Heart right ventricle (tissue), 16 donors: ENCODE measurements at regions of chr1 and their contacts with region 1.

Region 1: GRCh38 chr1:93722081-93723031 is 40.7 kb upstream of the BCAR3 start:
- DNase-seq: peak; percentile 76 to 80
- ATAC-seq: peak; percentile 76 to 94 (median 90)
- H3K4me3 ChIP-seq: no peak overlapping the region
- H3K27ac ChIP-seq: peak overlapping the region; percentile 58 to 93 (median 88)
- H3K4me1 ChIP-seq: peaks cover 25 to 60% (median 33%) of the 10 kb centered on the region in 9 donors
- H3K27me3 ChIP-seq: no peaks in the 10 kb centered on the region
- CTCF ChIP-seq: peak in 7 of 9 donors; percentile 16 to 58 (median 36)

Region 2: GRCh38 chr1:93288558-93288957 is 433.8 kb before region 1 on chr1:
- intact Hi-C with region 1: no loop called
- DNase-seq: no peak
- ATAC-seq: no peak
- H3K4me3 ChIP-seq: no peak overlapping the region
- H3K27ac ChIP-seq: no peak overlapping the region
- H3K4me1 ChIP-seq: no peaks in the 10 kb centered on the region
- H3K27me3 ChIP-seq: no peaks in the 10 kb centered on the region
- CTCF ChIP-seq: no peak

Region 3: GRCh38 chr1:93680757-93681550 is 41.4 kb before region 1 on chr1:
- intact Hi-C with region 1: loop called in 3 of 10 experiments (anchors 5 kb)
- DNase-seq: peak; percentile 82 to 86
- ATAC-seq: peak; percentile 87 to 94 (median 91)
- H3K4me3 ChIP-seq: peak overlapping the region; percentile 73 to 95 (median 86)
- H3K27ac ChIP-seq: peak overlapping the region; percentile 78 to 96 (median 90)
- H3K4me1 ChIP-seq: peaks cover 9 to 58% (median 45%) of the 10 kb centered on the region in 9 donors
- H3K27me3 ChIP-seq: peaks cover 0 to 32% (median 0%) of the 10 kb centered on the region in 7 donors
- CTCF ChIP-seq: peak; percentile 42 to 74 (median 57)

Region 4: GRCh38 chr1:93770640-93771039 is 48.3 kb after region 1 on chr1:
- intact Hi-C with region 1: loop called in 1 of 10 experiments (anchors 5 kb)
- DNase-seq: no peak
- ATAC-seq: no peak
- H3K4me3 ChIP-seq: no peak overlapping the region
- H3K27ac ChIP-seq: no peak overlapping the region
- H3K4me1 ChIP-seq: peaks cover 2 to 22% (median 16%) of the 10 kb centered on the region in 9 donors
- H3K27me3 ChIP-seq: peaks cover 0 to 3% (median 0%) of the 10 kb centered on the region in 7 donors
- CTCF ChIP-seq: no peak

Region 5: GRCh38 chr1:93804412-93804811 is 82.1 kb after region 1 on chr1:
- intact Hi-C with region 1: loop called in 1 of 10 experiments (anchors 5 kb)
- DNase-seq: peak in 1 of 2 donors; percentile 23
- ATAC-seq: peak; percentile 91 to 98 (median 94)
- H3K4me3 ChIP-seq: no peak overlapping the region
- H3K27ac ChIP-seq: peak overlapping the region in 7 of 10 donors; percentile 13 to 60 (median 46)
- H3K4me1 ChIP-seq: peaks cover 0 to 21% (median 13%) of the 10 kb centered on the region in 9 donors
- H3K27me3 ChIP-seq: no peaks in the 10 kb centered on the region
- CTCF ChIP-seq: no peak

Region 6: GRCh38 chr1:93814059-93814794 is 91.9 kb after region 1 on chr1:
- intact Hi-C with region 1: loop called in 4 of 10 experiments (anchors 5 kb)
- DNase-seq: peak in 1 of 2 donors; percentile 75
- ATAC-seq: peak; percentile 69 to 87 (median 78)
- H3K4me3 ChIP-seq: no peak overlapping the region
- H3K27ac ChIP-seq: no peak overlapping the region
- H3K4me1 ChIP-seq: peaks cover 2 to 57% (median 45%) of the 10 kb centered on the region in 9 donors
- H3K27me3 ChIP-seq: no peaks in the 10 kb centered on the region
- CTCF ChIP-seq: peak; percentile 96 to 100 (median 98)

Region 7: GRCh38 chr1:93964777-93965200 is 242.4 kb after region 1 on chr1:
- intact Hi-C with region 1: no loop called
- DNase-seq: no peak
- ATAC-seq: no peak
- H3K4me3 ChIP-seq: no peak overlapping the region
- H3K27ac ChIP-seq: no peak overlapping the region
- H3K4me1 ChIP-seq: peaks cover 0 to 7% (median 0%) of the 10 kb centered on the region in 9 donors
- H3K27me3 ChIP-seq: no peaks in the 10 kb centered on the region
- CTCF ChIP-seq: no peak